ENCODE measurements at regions of chr4 and their contacts with region 1.

Region 1: GRCh38 chr4:105146276-105147015 is at the start of gene TET2:
- DNase-seq: peak; percentile 86
- H3K4me3 Mint-ChIP-seq: peak within 1 kb of the TSS; percentile 96
- H3K27ac Mint-ChIP-seq: peak within 1 kb of the TSS; percentile 97
- H3K4me1 Mint-ChIP-seq: peaks cover 35% of the 10 kb centered on the region
- H3K27me3 Mint-ChIP-seq: no peaks in the 10 kb centered on the region
- total RNA-seq, gene TET2: 36.0 to 36.1 TPM

Region 2: DNA sequence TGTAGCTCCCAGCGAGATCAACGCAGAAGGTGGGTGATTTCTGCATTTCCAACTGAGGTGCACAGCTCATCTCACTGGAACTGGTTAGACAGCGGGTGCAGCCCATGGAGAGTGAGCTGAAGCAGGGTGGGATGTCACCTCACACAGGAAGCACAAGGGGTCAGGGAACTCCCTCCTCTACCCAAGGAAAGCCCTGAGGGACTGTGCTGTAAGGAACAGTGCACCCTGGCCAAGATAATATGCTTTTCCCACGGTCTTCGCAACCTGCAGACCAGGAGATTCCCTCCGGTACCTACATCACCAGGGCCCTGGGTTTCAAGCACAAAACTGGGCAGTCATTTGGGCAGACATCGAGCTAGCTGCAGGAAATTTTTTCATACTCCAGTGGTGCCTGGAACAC is 216.1 kb before region 1 on chr4:
- CTCF ChIA-PET with region 1: no interaction called
- intact Hi-C with region 1: loop called (anchors 2 kb)
- DNase-seq: no peak
- H3K4me3 Mint-ChIP-seq: no peak overlapping the region
- H3K27ac Mint-ChIP-seq: no peak overlapping the region
- H3K4me1 Mint-ChIP-seq: peaks cover 25% of the 10 kb centered on the region
- H3K27me3 Mint-ChIP-seq: no peaks in the 10 kb centered on the region

Region 3: GRCh38 chr4:105166066-105166465 is 19.6 kb after region 1 on chr4:
- CTCF ChIA-PET with region 1: interaction called, 3 read pairs
- intact Hi-C with region 1: loop called (anchors 2 kb)
- DNase-seq: no peak
- H3K4me3 Mint-ChIP-seq: no peak overlapping the region
- H3K27ac Mint-ChIP-seq: no peak overlapping the region
- H3K4me1 Mint-ChIP-seq: peaks cover 27% of the 10 kb centered on the region
- H3K27me3 Mint-ChIP-seq: no peaks in the 10 kb centered on the region

Region 4: DNA sequence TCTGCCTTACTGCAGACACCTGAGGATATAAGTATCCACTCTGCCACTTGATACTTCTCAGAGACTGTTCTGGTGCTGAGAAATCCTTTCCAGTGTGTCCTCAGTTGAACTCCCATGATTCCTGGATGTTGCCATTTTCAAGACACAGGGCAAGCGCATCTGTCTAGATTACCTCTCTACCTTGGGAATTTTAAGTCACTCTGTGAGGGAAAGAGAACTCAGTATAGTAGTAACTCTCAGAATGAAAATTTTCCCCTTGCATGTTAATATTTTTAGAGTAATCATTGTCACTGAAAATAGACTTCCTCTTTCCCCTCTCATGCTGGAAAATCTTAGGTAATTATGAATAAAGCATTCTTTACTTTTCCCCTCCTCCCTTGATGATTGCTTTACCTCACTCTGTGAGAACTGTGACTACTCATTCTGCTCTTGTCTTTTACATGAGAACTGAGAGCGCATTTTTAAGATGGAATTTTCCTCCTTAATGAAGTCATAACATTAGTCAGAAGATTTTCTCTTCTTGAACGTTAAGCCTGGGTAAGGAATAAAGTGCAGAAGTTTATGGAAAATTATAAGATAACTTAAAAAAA is 45.3 kb after region 1 on chr4:
- CTCF ChIA-PET with region 1: interaction called, 4 read pairs
- intact Hi-C with region 1: loop called (anchors 1 kb)
- DNase-seq: no peak
- H3K4me3 Mint-ChIP-seq: no peak overlapping the region
- H3K27ac Mint-ChIP-seq: peak overlapping the region; percentile 87
- H3K4me1 Mint-ChIP-seq: peaks cover 85% of the 10 kb centered on the region
- H3K27me3 Mint-ChIP-seq: no peaks in the 10 kb centered on the region

Region 5: GRCh38 chr4:105274504-105274903 is 128.1 kb after region 1 on chr4:
- CTCF ChIA-PET with region 1: no interaction called
- intact Hi-C with region 1: loop called (anchors 2 kb)
- DNase-seq: no peak
- H3K4me3 Mint-ChIP-seq: no peak overlapping the region
- H3K27ac Mint-ChIP-seq: peak overlapping the region; percentile 64
- H3K4me1 Mint-ChIP-seq: peaks cover 43% of the 10 kb centered on the region
- H3K27me3 Mint-ChIP-seq: no peaks in the 10 kb centered on the region

Region 6: DNA sequence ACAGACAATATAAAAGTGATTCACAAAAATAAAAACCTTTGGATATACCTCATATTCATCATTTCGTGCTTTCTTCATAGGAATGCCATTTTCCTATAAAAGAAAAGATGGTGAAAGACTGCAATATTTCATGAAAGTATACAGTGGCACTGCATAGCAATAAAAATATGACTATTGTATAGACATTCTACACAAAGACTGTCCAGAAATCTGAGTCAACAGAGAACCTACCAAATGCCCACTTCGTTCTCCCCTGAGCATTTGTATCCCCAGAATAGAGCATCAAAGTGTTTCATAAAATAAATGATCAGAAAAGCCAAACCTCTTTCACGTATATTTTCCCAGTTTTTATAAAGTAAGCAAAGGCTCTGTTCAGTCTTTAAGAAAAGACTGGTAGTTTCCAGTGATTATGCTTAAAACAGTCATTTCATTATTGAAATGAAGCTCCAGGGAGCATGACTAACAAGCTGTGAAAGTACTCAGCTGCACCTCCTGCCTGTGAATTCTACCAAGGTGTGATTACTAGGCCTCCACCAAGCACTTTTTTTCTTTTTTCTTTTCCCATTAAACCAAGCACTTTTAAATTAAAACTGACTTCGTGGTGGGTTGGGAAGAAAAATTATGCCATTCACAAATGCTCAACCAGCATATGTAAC is 307.2 kb after region 1 on chr4:
- CTCF ChIA-PET with region 1: no interaction called
- intact Hi-C with region 1: loop called (anchors 1 kb)
- DNase-seq: peak; percentile 63
- H3K4me3 Mint-ChIP-seq: no peak overlapping the region
- H3K27ac Mint-ChIP-seq: peak overlapping the region; percentile 47
- H3K4me1 Mint-ChIP-seq: peaks cover 41% of the 10 kb centered on the region
- H3K27me3 Mint-ChIP-seq: no peaks in the 10 kb centered on the region

Region 7: DNA sequence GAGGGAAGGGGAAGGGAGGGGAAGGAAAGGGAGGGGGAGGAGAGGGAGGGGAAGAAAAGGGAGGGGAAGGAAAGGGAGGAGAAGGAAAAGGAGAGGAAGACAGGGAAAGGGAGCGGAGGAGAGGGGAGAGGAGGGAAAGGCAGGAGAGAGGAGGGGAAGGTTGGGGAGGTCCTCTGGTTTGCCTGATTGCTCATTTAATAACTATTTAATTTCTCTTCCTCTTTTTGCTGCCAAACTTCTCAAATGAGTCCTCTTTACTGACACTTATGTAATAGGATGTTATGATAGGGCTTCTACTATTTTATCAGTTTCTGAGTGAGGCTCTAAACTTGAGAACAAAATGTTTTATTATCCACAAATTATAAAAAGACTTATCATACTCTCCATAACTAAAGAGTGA is 362.8 kb after region 1 on chr4:
- CTCF ChIA-PET with region 1: no interaction called
- intact Hi-C with region 1: no loop called
- DNase-seq: no peak
- H3K4me3 Mint-ChIP-seq: no peak overlapping the region
- H3K27ac Mint-ChIP-seq: no peak overlapping the region
- H3K4me1 Mint-ChIP-seq: no peaks in the 10 kb centered on the region
- H3K27me3 Mint-ChIP-seq: peaks cover 11% of the 10 kb centered on the region

Region 8: GRCh38 chr4:106315968-106316772 is 1169.7 kb after region 1 on chr4 and contains the starts of genes AIMP1 and TBCK:
- CTCF ChIA-PET with region 1: no interaction called
- intact Hi-C with region 1: loop called (anchors 5 kb)
- DNase-seq: peak; percentile 90
- H3K4me3 Mint-ChIP-seq: no peak within 1 kb of the TSS
- H3K27ac Mint-ChIP-seq: no peak within 1 kb of the TSS
- H3K4me1 Mint-ChIP-seq: peaks cover 45% of the 10 kb centered on the region
- H3K27me3 Mint-ChIP-seq: no peaks in the 10 kb centered on the region
- total RNA-seq, gene AIMP1: 49.7 to 52.0 TPM
- total RNA-seq, gene TBCK: 19.4 to 21.6 TPM